Activated naive CD4-positive, alpha-beta T cell treated with anti-CD3 and anti-CD28 coated beads for 36 hours (primary cell): ENCODE measurements at regions of chr6 and their contacts with region 1.

Region 1: GRCh38 chr6:85482905-85483700 is 33.2 kb downstream of the NT5E start:
- DNase-seq: peak; percentile 87
- H3K4me3 Mint-ChIP-seq: no peak overlapping the region
- H3K27ac Mint-ChIP-seq: no peak overlapping the region
- H3K4me1 Mint-ChIP-seq: peaks cover 7% of the 10 kb centered on the region
- H3K27me3 Mint-ChIP-seq: peaks cover 2% of the 10 kb centered on the region

Region 2: GRCh38 chr6:85323435-85324040 is 159.6 kb before region 1 on chr6:
- CTCF ChIA-PET with region 1: interaction called, 13 read pairs
- intact Hi-C with region 1: no loop called
- DNase-seq: peak; percentile 88
- H3K4me3 Mint-ChIP-seq: no peak overlapping the region
- H3K27ac Mint-ChIP-seq: no peak overlapping the region
- H3K4me1 Mint-ChIP-seq: no peaks in the 10 kb centered on the region
- H3K27me3 Mint-ChIP-seq: peaks cover 6% of the 10 kb centered on the region

Region 3: GRCh38 chr6:85360794-85361642 is 122.1 kb before region 1 on chr6:
- CTCF ChIA-PET with region 1: interaction called, 109 read pairs
- intact Hi-C with region 1: no loop called
- DNase-seq: no peak
- H3K4me3 Mint-ChIP-seq: no peak overlapping the region
- H3K27ac Mint-ChIP-seq: no peak overlapping the region
- H3K4me1 Mint-ChIP-seq: peaks cover 2% of the 10 kb centered on the region
- H3K27me3 Mint-ChIP-seq: peaks cover 2% of the 10 kb centered on the region

Region 4: DNA sequence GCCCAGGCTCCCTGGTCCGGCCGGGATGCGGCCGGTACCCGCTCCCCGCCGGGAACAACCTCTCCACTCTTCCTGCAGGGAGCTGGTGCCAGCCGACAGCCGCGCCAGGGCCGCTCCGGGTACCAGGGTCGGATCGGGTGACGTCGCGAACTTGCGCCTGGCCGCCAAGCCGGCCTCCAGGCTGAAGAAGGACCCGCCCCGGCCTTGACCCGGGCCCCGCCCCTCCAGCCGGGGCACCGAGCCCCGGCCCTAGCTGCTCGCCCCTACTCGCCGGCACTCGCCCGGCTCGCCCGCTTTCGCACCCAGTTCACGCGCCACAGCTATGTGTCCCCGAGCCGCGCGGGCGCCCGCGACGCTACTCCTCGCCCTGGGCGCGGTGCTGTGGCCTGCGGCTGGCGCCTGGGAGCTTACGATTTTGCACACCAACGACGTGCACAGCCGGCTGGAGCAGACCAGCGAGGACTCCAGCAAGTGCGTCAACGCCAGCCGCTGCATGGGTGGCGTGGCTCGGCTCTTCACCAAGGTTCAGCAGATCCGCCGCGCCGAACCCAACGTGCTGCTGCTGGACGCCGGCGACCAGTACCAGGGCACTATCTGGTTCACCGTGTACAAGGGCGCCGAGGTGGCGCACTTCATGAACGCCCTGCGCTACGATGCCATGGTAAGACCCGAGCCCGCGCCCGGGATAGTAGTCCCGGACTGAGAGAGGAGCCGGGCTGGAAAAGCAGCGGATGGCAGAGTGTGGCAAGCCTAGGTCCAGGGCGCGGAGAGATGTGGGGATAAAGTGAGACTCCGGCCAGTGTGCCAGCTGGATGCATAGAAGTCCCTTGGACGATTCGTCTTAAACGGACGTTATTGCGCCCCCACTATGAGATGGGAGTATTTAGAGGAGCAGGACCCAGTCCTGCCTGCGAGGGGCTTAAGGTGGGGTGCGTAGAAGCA is 33.0 kb before region 1 on chr6 and contains the start of gene NT5E:
- CTCF ChIA-PET with region 1: interaction called, 46 read pairs
- intact Hi-C with region 1: loop called (anchors 1 kb)
- DNase-seq: peak; percentile 37
- H3K4me3 Mint-ChIP-seq: peak within 1 kb of the TSS; percentile 76
- H3K27ac Mint-ChIP-seq: peak within 1 kb of the TSS; percentile 63
- H3K4me1 Mint-ChIP-seq: peaks cover 27% of the 10 kb centered on the region
- H3K27me3 Mint-ChIP-seq: peaks cover 52% of the 10 kb centered on the region
- total RNA-seq, gene NT5E: 0.55 to 1.4 TPM

Region 5: GRCh38 chr6:85472749-85473148 is 10.4 kb before region 1 on chr6:
- CTCF ChIA-PET with region 1: interaction called, 78 read pairs
- intact Hi-C with region 1: no loop called
- DNase-seq: no peak
- H3K4me3 Mint-ChIP-seq: no peak overlapping the region
- H3K27ac Mint-ChIP-seq: no peak overlapping the region
- H3K4me1 Mint-ChIP-seq: no peaks in the 10 kb centered on the region
- H3K27me3 Mint-ChIP-seq: no peaks in the 10 kb centered on the region

Region 6: DNA sequence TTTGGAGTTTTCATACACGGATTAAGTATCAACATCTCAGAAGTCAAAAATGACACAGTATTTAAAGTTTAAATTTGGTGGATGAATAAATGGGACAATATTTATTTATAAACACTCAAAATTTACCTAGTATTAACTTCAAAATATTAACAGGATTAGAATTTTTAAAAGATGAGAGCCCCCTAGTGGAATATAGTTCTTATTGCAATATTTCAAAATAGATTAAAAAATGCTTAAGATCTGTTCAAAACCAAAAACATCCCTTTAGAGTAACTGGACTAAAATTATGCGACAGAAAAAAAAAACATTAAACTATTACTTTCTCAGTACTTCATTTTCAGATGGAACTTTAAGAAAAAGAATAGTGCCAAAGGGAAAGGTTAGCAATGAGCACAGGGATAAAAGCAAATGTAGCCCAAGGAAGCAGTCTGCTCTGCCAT is 54.0 kb after region 1 on chr6:
- CTCF ChIA-PET with region 1: interaction called, 13 read pairs
- intact Hi-C with region 1: no loop called
- DNase-seq: no peak
- H3K4me3 Mint-ChIP-seq: no peak overlapping the region
- H3K27ac Mint-ChIP-seq: no peak overlapping the region
- H3K4me1 Mint-ChIP-seq: no peaks in the 10 kb centered on the region
- H3K27me3 Mint-ChIP-seq: no peaks in the 10 kb centered on the region

Region 7: DNA sequence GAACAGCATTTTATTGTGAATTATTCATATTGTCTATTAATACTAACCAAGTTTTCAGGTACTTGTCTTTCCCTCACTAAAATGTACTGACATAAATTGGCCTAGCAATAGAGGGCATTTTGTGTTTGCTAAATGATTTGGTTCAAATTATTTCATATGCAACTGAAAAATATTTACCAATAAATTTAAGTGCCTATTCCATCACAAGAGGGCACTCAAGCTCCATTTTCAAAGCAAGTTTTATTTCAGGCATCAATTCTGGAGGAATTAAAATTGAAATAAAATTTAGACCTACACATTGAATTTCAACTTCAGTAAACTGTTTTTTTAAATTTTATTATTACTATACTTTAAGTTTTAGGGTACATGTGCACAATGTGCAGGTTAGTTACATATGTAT is 273.9 kb after region 1 on chr6:
- CTCF ChIA-PET with region 1: no interaction called
- intact Hi-C with region 1: no loop called
- DNase-seq: no peak
- H3K4me3 Mint-ChIP-seq: no peak overlapping the region
- H3K27ac Mint-ChIP-seq: no peak overlapping the region
- H3K4me1 Mint-ChIP-seq: no peaks in the 10 kb centered on the region
- H3K27me3 Mint-ChIP-seq: peaks cover 6% of the 10 kb centered on the region